HCT116 (cell line): ENCODE measurements at regions of chr5 and their contacts with region 1.

Region 1: DNA sequence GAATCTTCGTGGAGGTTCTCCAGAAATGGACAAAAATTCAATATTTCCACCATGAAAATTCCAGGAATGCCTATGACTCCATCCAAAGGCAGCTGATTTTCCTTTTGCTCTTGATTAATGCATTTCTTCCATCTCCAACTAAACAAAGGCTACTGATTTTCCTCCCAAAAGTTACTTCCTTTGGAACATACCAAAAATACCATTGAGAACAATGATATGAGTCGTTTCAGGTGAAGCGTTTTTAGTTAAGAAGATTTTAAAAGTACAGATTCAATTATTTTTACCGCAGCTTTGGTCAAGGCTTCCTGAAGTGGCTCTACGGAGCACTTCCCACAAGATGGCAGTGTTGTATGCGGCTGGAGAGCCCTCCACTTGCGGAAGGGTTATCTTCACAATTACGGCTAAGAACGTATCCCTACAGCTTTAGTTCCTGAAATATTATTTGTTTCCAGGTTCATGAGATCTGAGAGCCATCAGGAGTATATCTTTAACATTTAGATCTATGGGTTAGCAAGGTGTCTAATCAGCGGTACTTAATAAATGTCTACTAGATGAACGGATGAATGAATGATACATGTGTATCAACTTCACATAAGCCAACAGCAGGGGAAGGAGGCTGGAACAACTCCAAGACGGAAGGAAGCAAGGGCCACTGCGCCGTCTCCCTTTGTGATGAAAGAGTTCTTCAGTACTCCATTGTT is 35.9 kb upstream of the ARSB start:
- DNase-seq: peak; percentile 58
- ATAC-seq: peak; percentile 92
- H3K4me3 ChIP-seq: peak overlapping the region in 1 of 2 experiments; percentile 13; a peak in 2 of 4 replicates
- H3K27ac ChIP-seq: no peak overlapping the region
- H3K4me1 ChIP-seq: peaks cover 2 to 15% of the 10 kb centered on the region in 2 experiments; a peak in 2 of 4 replicates
- H3K27me3 ChIP-seq: no peaks in the 10 kb centered on the region
- CTCF ChIP-seq: peak; percentile 68 to 95 (median 82)
- POLR2A ChIP-seq: no peak
- RAD21 ChIP-seq: peak; percentile 81

Region 2: GRCh38 chr5:78984439-78985115 is 36.4 kb before region 1 on chr5:
- CTCF ChIA-PET with region 1: interaction called, 17 read pairs
- POLR2A ChIA-PET with region 1: no interaction called
- RAD21 ChIA-PET with region 1: interaction called in 1 of 2 experiments, 3 read pairs
- intact Hi-C with region 1: no loop called
- DNase-seq: peak; percentile 48
- ATAC-seq: peak; percentile 81
- H3K4me3 ChIP-seq: peak overlapping the region; percentile 48 to 66
- H3K27ac ChIP-seq: peak overlapping the region; percentile 90
- H3K4me1 ChIP-seq: peaks cover 16 to 37% of the 10 kb centered on the region in 2 experiments
- H3K27me3 ChIP-seq: no peaks in the 10 kb centered on the region
- CTCF ChIP-seq: peak in 1 of 3 experiments; percentile 35; a peak in 2 of 6 replicates
- POLR2A ChIP-seq: peak; percentile 70
- RAD21 ChIP-seq: no peak

Region 3: GRCh38 chr5:79109527-79110492 is 88.8 kb after region 1 on chr5:
- CTCF ChIA-PET with region 1: interaction called, 9 read pairs
- POLR2A ChIA-PET with region 1: no interaction called
- RAD21 ChIA-PET with region 1: no interaction called
- intact Hi-C with region 1: loop called (anchors 1 kb)
- DNase-seq: peak; percentile 29
- ATAC-seq: peak; percentile 92
- H3K4me3 ChIP-seq: no peak overlapping the region
- H3K27ac ChIP-seq: no peak overlapping the region
- H3K4me1 ChIP-seq: no peaks in the 10 kb centered on the region
- H3K27me3 ChIP-seq: no peaks in the 10 kb centered on the region
- CTCF ChIP-seq: peak; percentile 54 to 84 (median 81); a peak in 5 of 6 replicates
- POLR2A ChIP-seq: no peak
- RAD21 ChIP-seq: peak; percentile 60

Region 4: GRCh38 chr5:79464695-79465332 is 443.8 kb after region 1 on chr5:
- CTCF ChIA-PET with region 1: interaction called, 10 read pairs
- POLR2A ChIA-PET with region 1: interaction called, 4 read pairs
- RAD21 ChIA-PET with region 1: no interaction called
- intact Hi-C with region 1: loop called (anchors 1 kb)
- DNase-seq: peak; percentile 10
- ATAC-seq: peak; percentile 71
- H3K4me3 ChIP-seq: no peak overlapping the region
- H3K27ac ChIP-seq: no peak overlapping the region
- H3K4me1 ChIP-seq: no peaks in the 10 kb centered on the region
- H3K27me3 ChIP-seq: no peaks in the 10 kb centered on the region
- CTCF ChIP-seq: peak; percentile 44 to 81 (median 78); a peak in 5 of 6 replicates
- POLR2A ChIP-seq: no peak
- RAD21 ChIP-seq: peak; percentile 84

Region 5: DNA sequence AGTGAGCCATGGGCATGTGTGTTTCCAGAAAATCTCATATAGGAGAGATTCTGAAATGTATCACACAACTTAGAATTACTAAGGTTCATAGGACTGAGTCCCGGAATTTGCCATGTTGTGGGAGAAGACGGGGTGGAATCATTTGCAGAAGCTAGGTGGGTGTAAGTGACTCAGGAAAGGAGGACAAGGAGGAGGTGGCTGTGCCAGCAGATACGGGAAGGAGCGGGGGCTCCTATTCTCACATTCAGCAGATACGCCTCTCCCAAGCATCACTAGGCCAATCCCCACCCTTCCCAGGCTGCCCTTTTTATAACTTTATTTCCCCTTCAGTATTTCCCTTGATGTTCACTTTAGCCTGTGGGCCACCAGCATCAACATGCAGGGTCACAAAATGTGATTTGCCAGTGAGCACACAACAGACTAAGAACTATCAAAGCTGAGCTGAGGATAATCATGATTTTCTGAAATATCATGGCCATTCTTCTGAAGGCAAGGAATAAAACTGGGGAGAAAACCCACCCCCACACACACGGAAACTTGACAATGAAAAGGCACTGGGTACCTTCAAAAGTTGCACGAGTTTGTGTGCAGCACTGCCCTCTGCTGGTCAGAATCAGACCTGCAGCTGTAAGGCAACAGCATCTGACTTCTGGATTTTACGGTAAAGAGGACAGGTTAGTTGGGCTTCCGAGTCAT is 836.9 kb after region 1 on chr5:
- CTCF ChIA-PET with region 1: interaction called, 9 read pairs
- POLR2A ChIA-PET with region 1: no interaction called
- RAD21 ChIA-PET with region 1: no interaction called
- intact Hi-C with region 1: loop called (anchors 2 kb)
- DNase-seq: peak; percentile 49
- ATAC-seq: peak; percentile 76
- H3K4me3 ChIP-seq: no peak overlapping the region
- H3K27ac ChIP-seq: no peak overlapping the region
- H3K4me1 ChIP-seq: peaks cover 4 to 11% of the 10 kb centered on the region in 2 experiments; a peak in 3 of 4 replicates
- H3K27me3 ChIP-seq: no peaks in the 10 kb centered on the region
- CTCF ChIP-seq: peak; percentile 75 to 98 (median 95); a peak in 5 of 6 replicates
- POLR2A ChIP-seq: no peak
- RAD21 ChIP-seq: peak; percentile 89